Colonic mucosa (tissue), 4 donors: ENCODE measurements at regions of chrX and their contacts with region 1.

Region 1: GRCh38 chrX:5113128-5113527 is 1115.5 kb downstream of the NLGN4X start:
- DNase-seq: no peak
- H3K4me3 ChIP-seq: no peak overlapping the region
- H3K27ac ChIP-seq: no peak overlapping the region
- H3K4me1 ChIP-seq: no peaks in the 10 kb centered on the region
- H3K27me3 ChIP-seq: no peaks in the 10 kb centered on the region
- CTCF ChIP-seq: no peak

Region 2: DNA sequence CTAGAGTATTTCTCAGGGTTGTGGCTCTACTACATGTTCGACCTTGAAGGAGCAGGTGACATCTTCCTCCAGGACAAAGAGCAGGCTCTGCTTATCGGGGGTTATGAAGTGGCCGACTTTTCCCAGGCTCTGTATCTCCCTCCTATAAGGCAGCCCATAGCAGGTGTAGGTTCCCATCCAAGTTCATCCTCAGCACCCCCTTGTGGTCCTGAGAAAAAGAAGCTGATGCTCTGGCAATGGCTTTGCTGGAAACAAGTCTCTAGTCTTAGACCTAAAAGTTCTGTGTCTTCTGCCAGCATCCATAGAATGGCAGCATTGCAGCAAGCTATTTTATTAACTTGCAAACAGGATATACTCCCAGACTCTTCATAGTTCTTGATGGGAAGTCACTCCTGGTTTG is 563.1 kb before region 1 on chrX:
- intact Hi-C with region 1: loop called (anchors 10 kb)
- DNase-seq: no peak
- H3K4me3 ChIP-seq: no peak overlapping the region
- H3K27ac ChIP-seq: no peak overlapping the region
- H3K4me1 ChIP-seq: no peaks in the 10 kb centered on the region
- H3K27me3 ChIP-seq: no peaks in the 10 kb centered on the region
- CTCF ChIP-seq: no peak

Region 3: GRCh38 chrX:5474282-5474681 is 361.2 kb after region 1 on chrX:
- intact Hi-C with region 1: no loop called
- DNase-seq: no peak
- H3K4me3 ChIP-seq: no peak overlapping the region
- H3K27ac ChIP-seq: no peak overlapping the region
- H3K4me1 ChIP-seq: no peaks in the 10 kb centered on the region
- H3K27me3 ChIP-seq: no peaks in the 10 kb centered on the region
- CTCF ChIP-seq: no peak

Region 4: GRCh38 chrX:5683996-5684395 is 570.9 kb after region 1 on chrX:
- intact Hi-C with region 1: no loop called
- DNase-seq: no peak
- H3K4me3 ChIP-seq: no peak overlapping the region
- H3K27ac ChIP-seq: no peak overlapping the region
- H3K4me1 ChIP-seq: no peaks in the 10 kb centered on the region
- H3K27me3 ChIP-seq: no peaks in the 10 kb centered on the region
- CTCF ChIP-seq: no peak